H1 (cell line): ENCODE measurements at regions of chr12 and their contacts with region 1.

Region 1: GRCh38 chr12:106223485-106224354 is 24.1 kb downstream of the CKAP4 start:
- DNase-seq: peak in 1 of 2 experiments; percentile 92
- H3K4me3 ChIP-seq: no peak overlapping the region
- H3K27ac ChIP-seq: no peak overlapping the region
- H3K4me1 ChIP-seq: peaks cover 0 to 2% (median 0%) of the 10 kb centered on the region in 4 experiments; a peak in 1 of 7 replicates
- H3K27me3 ChIP-seq: no peaks in the 10 kb centered on the region
- CTCF ChIP-seq: peak; percentile 89 to 93 (median 91)
- EP300 ChIP-seq: no peak
- POLR2A ChIP-seq: no peak
- RAD21 ChIP-seq: peak; percentile 90 to 91

Region 2: GRCh38 chr12:106149096-106149784 is 74.5 kb before region 1 on chr12:
- CTCF ChIA-PET with region 1: interaction called, 16 read pairs
- POLR2A ChIA-PET with region 1: interaction called, 3 read pairs
- DNase-seq: no peak
- H3K4me3 ChIP-seq: no peak overlapping the region
- H3K27ac ChIP-seq: no peak overlapping the region
- H3K4me1 ChIP-seq: peaks cover 0 to 7% (median 1%) of the 10 kb centered on the region in 4 experiments; a peak in 2 of 7 replicates
- H3K27me3 ChIP-seq: no peaks in the 10 kb centered on the region
- CTCF ChIP-seq: peak; percentile 3 to 69 (median 53); a peak in 3 of 4 replicates
- EP300 ChIP-seq: no peak
- POLR2A ChIP-seq: no peak
- RAD21 ChIP-seq: peak; percentile 56 to 70

Region 3: GRCh38 chr12:106211973-106212372 is 11.7 kb before region 1 on chr12:
- CTCF ChIA-PET with region 1: interaction called, 27 read pairs
- POLR2A ChIA-PET with region 1: interaction called, 3 read pairs
- DNase-seq: no peak
- H3K4me3 ChIP-seq: no peak overlapping the region
- H3K27ac ChIP-seq: no peak overlapping the region
- H3K4me1 ChIP-seq: no peaks in the 10 kb centered on the region
- H3K27me3 ChIP-seq: no peaks in the 10 kb centered on the region
- CTCF ChIP-seq: no peak
- EP300 ChIP-seq: no peak
- POLR2A ChIP-seq: no peak
- RAD21 ChIP-seq: no peak

Region 4: GRCh38 chr12:106255952-106256351 is 32.2 kb after region 1 on chr12:
- CTCF ChIA-PET with region 1: interaction called, 10 read pairs
- POLR2A ChIA-PET with region 1: no interaction called
- DNase-seq: peak in 1 of 2 experiments; percentile 1
- H3K4me3 ChIP-seq: no peak overlapping the region
- H3K27ac ChIP-seq: no peak overlapping the region
- H3K4me1 ChIP-seq: peaks cover 0 to 13% (median 6%) of the 10 kb centered on the region in 4 experiments; a peak in 3 of 7 replicates
- H3K27me3 ChIP-seq: no peaks in the 10 kb centered on the region
- CTCF ChIP-seq: no peak
- EP300 ChIP-seq: no peak
- POLR2A ChIP-seq: no peak
- RAD21 ChIP-seq: no peak

Region 5: GRCh38 chr12:106282457-106283097 is 58.9 kb after region 1 on chr12:
- CTCF ChIA-PET with region 1: interaction called, 125 read pairs
- POLR2A ChIA-PET with region 1: interaction called, 5 read pairs
- DNase-seq: peak in 1 of 2 experiments; percentile 57
- H3K4me3 ChIP-seq: no peak overlapping the region
- H3K27ac ChIP-seq: no peak overlapping the region
- H3K4me1 ChIP-seq: no peaks in the 10 kb centered on the region
- H3K27me3 ChIP-seq: no peaks in the 10 kb centered on the region
- CTCF ChIP-seq: peak; percentile 59 to 84 (median 80)
- EP300 ChIP-seq: no peak
- POLR2A ChIP-seq: no peak
- RAD21 ChIP-seq: peak; percentile 91 to 92

Region 6: DNA sequence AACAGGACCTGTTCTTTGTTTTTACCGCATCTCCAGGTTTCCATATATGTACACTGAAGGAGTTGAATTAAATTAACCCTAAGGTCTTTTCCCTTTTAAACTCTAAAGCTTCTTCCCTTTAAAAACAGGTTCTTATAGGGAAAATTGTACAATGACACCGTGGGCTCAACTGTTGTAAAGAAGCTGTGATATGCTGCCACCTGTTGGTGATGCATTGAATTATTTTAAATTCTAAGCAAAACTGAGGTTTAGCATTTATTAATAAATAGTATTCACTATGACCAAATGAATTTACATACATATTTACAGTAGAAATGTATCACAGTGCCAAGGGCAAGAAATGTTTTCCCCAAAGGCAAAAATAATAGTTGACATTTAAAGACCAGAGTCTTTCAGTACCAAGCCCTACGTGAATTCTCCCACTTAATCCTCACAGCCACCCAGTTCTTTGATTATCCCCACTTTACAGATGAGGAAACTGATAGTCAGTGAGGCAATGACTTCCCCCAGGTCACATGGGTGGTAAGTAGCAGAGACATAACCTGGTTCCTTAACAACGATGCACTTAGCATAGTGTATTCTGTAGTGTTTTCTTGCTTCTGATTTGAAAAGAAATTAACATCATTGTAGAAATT is 696.3 kb after region 1 on chr12:
- CTCF ChIA-PET with region 1: interaction called, 12 read pairs
- POLR2A ChIA-PET with region 1: no interaction called
- DNase-seq: no peak
- H3K4me3 ChIP-seq: peak overlapping the region in 1 of 4 experiments; percentile 18; a peak in 1 of 8 replicates
- H3K27ac ChIP-seq: no peak overlapping the region
- H3K4me1 ChIP-seq: peaks cover 0 to 15% (median 14%) of the 10 kb centered on the region in 4 experiments; a peak in 4 of 7 replicates
- H3K27me3 ChIP-seq: no peaks in the 10 kb centered on the region; a peak in 2 of 7 replicates
- CTCF ChIP-seq: peak in 2 of 3 experiments; percentile 41 to 57; a peak in 2 of 4 replicates
- EP300 ChIP-seq: no peak
- POLR2A ChIP-seq: no peak
- RAD21 ChIP-seq: peak; percentile 77 to 80